Endothelial cell of umbilical vein (primary cell): ENCODE measurements at regions of chr4 and their contacts with region 1.

Region 1: GRCh38 chr4:77104791-77105540 is 29.2 kb upstream of the CCNI start:
- DNase-seq: no peak
- H3K4me3 ChIP-seq: no peak overlapping the region
- H3K27ac ChIP-seq: no peak overlapping the region
- H3K4me1 ChIP-seq: peaks cover 9% of the 10 kb centered on the region
- H3K27me3 ChIP-seq: peaks cover 28 to 41% of the 10 kb centered on the region in 2 experiments
- CTCF ChIP-seq: no peak
- POLR2A ChIP-seq: no peak

Region 2: DNA sequence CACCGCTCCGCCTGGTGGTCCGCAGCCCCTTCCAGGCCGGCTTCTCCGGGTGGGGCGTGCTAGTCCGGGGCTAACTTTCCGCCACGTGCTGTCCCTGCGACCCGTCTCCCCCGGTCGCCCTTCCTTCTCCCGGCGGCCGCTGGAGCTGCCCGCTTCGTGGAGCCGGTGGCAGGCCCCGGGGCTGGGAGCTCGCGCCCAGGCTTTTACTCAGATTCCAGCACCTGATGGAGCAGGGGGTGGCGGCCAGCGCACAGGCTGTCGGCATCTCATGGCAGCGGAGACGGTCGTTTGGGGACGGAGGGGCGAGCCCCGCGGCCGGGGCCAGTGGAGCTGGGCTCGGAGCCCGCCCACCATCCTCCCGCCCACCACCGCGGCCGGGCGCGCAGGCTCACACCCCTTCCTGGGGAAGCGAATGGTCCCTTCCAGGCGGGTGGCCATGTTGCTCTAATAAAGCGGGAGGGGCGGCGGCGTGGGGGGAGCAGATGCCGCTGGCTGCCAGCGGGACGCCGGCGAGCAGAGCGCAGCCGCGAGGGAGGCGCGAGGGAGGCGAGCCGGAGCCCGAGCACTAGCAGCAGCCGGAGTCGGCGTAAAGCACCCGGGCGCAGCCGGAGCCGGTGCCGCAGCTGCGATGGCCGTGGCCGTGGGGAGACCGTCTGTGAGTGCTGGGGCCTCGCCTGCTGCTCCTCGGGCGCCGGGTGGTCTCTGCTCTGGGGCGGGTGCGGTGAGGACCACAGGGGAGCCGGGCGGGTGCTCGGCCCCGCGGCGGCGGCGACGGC is 155.5 kb before region 1 on chr4 and contains the start of gene SEPTIN11:
- CTCF ChIA-PET with region 1: no interaction called
- POLR2A ChIA-PET with region 1: no interaction called
- dilution Hi-C with region 1: no loop called
- intact Hi-C with region 1: no loop called
- DNase-seq: peak; percentile 92
- H3K4me3 ChIP-seq: peak within 1 kb of the TSS; percentile 73 to 95 (median 74)
- H3K27ac ChIP-seq: peak within 1 kb of the TSS; percentile 81
- H3K4me1 ChIP-seq: peaks cover 19% of the 10 kb centered on the region
- H3K27me3 ChIP-seq: no peaks in the 10 kb centered on the region
- CTCF ChIP-seq: peak in 1 of 2 donors; percentile 5
- POLR2A ChIP-seq: peak; percentile 96
- total RNA-seq, gene SEPTIN11: 168 and 202 TPM in 2 replicates

Region 3: GRCh38 chr4:77146186-77147078 is 41.5 kb after region 1 on chr4:
- CTCF ChIA-PET with region 1: interaction called, 5 read pairs
- POLR2A ChIA-PET with region 1: no interaction called
- dilution Hi-C with region 1: no loop called
- intact Hi-C with region 1: loop called (anchors 1 kb)
- DNase-seq: peak; percentile 67
- H3K4me3 ChIP-seq: no peak overlapping the region
- H3K27ac ChIP-seq: no peak overlapping the region
- H3K4me1 ChIP-seq: peaks cover 18% of the 10 kb centered on the region
- H3K27me3 ChIP-seq: peaks cover 0 to 4% of the 10 kb centered on the region in 2 experiments
- CTCF ChIP-seq: no peak
- POLR2A ChIP-seq: no peak

Region 4: GRCh38 chr4:77156533-77156911 is 51.6 kb after region 1 on chr4:
- CTCF ChIA-PET with region 1: interaction called, 6 read pairs
- POLR2A ChIA-PET with region 1: interaction called, 3 read pairs
- dilution Hi-C with region 1: no loop called
- intact Hi-C with region 1: loop called (anchors 1 kb)
- DNase-seq: peak; percentile 99
- H3K4me3 ChIP-seq: peak overlapping the region; percentile 75 to 98 (median 80)
- H3K27ac ChIP-seq: peak overlapping the region; percentile 86
- H3K4me1 ChIP-seq: peaks cover 15% of the 10 kb centered on the region
- H3K27me3 ChIP-seq: peaks cover 19 to 22% of the 10 kb centered on the region in 2 experiments
- CTCF ChIP-seq: no peak
- POLR2A ChIP-seq: peak; percentile 57